Adrenal gland (tissue), 19 donors: ENCODE measurements at regions of chr1 and their contacts with region 1.

Region 1: DNA sequence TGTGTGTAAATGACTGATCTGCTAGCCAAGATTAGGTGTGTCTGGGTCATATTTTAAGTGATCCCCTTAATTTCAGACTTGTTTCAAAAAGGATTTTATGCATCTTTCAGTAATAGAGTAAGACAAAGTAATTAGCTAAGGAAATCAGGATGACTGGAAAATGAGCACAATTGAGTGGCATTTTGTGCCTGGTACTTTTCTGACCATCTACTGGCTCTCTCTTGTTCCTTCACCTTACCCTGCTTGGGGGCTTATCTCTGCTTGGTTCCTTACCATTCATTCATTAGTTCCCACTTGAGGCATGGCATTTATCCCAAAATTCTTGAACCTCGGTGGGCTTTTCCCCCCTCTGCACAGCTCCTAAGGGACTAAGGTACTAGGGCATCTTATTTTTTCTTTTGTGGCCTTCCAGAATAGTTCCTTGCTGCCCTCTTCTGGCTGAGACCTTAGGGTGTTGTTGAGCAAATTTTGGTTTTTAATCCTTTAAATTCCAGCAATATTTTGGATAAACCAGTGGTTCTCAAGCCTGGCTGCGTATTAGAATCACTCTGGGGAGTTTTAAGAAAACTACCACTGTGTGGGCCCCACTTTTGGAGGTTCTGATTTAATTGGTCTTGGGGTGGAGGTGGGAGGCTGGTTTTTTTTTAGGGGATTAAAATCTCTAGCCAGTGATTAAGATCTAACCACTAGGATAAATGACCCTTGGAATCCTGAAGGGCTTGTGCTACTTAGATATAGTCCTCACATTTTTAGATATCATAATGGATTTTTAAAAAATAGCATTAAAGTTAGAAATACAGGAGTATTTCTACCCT is 50.8 kb downstream of the HS2ST1 start:
- DNase-seq: peak in 4 of 7 donors; percentile 31 to 60 (median 46)
- H3K4me3 ChIP-seq: no peak overlapping the region
- H3K27ac ChIP-seq: no peak overlapping the region
- H3K4me1 ChIP-seq: no peaks in the 10 kb centered on the region
- H3K27me3 ChIP-seq: no peaks in the 10 kb centered on the region
- CTCF ChIP-seq: peak; percentile 49 to 71 (median 66)
- POLR2A ChIP-seq: no peak

Region 2: DNA sequence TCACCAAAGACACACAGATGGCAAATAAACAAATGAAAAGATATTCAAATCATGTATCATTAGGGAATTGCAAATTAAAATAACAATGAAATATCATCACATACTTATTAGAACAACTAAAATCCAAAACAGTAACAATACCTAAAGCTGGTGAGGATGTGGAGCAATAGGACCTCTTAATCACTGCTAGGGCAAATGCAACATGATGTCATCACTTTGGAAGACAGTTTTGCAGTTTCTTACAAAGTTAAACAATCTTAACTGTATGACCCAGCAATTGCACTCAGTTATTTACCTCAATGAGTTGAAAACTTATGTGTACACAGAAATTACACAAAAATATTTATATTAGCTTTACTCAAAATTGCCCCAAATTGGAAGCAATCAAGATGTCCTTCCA is 98.6 kb before region 1 on chr1:
- intact Hi-C with region 1: no loop called
- DNase-seq: no peak
- H3K4me3 ChIP-seq: no peak overlapping the region
- H3K27ac ChIP-seq: no peak overlapping the region
- H3K4me1 ChIP-seq: peaks cover 0 to 8% of the 10 kb centered on the region in 2 donors
- H3K27me3 ChIP-seq: no peaks in the 10 kb centered on the region
- CTCF ChIP-seq: no peak
- POLR2A ChIP-seq: no peak

Region 3: DNA sequence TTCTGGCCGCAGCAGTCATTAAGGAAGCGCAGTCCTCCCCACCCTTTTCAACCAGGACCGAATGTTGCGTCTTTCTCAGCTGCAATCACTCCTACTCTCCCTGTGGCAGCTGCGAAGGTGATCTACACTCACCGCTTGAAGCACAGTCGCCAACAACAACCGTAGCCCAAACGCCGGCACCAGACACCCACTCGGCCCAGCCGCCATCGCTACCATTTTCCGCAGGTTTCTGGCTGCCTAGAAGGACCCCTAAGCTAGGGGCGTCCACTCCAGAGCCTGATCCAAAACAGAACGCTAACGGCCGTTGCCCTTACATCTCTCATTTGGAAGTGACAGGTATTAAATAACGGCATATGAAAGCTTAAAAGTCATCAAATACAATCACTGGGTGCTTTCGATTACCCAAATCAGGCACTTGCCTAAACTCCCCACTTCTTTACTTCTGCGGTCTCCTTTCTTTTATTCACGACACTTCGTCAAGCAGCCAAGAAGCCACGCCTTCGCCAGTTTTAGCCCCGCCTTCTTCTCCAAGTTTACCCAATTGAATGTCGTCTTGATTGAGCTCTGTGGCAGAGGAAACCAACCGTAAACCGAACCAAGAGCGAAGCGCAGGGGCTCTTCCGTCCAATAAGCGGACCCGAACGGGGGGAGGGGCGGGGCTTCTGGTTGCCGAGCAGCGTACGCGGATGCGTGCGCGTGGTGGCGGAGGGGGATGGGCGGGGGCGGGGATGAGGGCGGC is 51.2 kb before region 1 on chr1 and contains the start of gene SELENOF:
- intact Hi-C with region 1: loop called in 1 of 2 experiments (anchors 10 kb)
- DNase-seq: peak; percentile 99 to 100 (median 100)
- H3K4me3 ChIP-seq: peak within 1 kb of the TSS; percentile 76 to 95 (median 90)
- H3K27ac ChIP-seq: peak within 1 kb of the TSS; percentile 49 to 95 (median 91)
- H3K4me1 ChIP-seq: peaks cover 15 to 44% of the 10 kb centered on the region in 2 donors
- H3K27me3 ChIP-seq: no peaks in the 10 kb centered on the region
- CTCF ChIP-seq: peak in 4 of 6 experiments; percentile 12 to 22 (median 15)
- POLR2A ChIP-seq: peak; percentile 24 to 30
- total RNA-seq, gene SELENOF: 163 to 277 (median 208) TPM

Region 4: GRCh38 chr1:87061742-87062156 is 96.5 kb after region 1 on chr1:
- intact Hi-C with region 1: no loop called
- DNase-seq: no peak
- H3K4me3 ChIP-seq: no peak overlapping the region
- H3K27ac ChIP-seq: no peak overlapping the region
- H3K4me1 ChIP-seq: peaks cover 0 to 13% of the 10 kb centered on the region in 2 donors
- H3K27me3 ChIP-seq: no peaks in the 10 kb centered on the region
- CTCF ChIP-seq: no peak
- POLR2A ChIP-seq: no peak